ENCODE measurements at regions of chr6 and their contacts with region 1.

Region 1: DNA sequence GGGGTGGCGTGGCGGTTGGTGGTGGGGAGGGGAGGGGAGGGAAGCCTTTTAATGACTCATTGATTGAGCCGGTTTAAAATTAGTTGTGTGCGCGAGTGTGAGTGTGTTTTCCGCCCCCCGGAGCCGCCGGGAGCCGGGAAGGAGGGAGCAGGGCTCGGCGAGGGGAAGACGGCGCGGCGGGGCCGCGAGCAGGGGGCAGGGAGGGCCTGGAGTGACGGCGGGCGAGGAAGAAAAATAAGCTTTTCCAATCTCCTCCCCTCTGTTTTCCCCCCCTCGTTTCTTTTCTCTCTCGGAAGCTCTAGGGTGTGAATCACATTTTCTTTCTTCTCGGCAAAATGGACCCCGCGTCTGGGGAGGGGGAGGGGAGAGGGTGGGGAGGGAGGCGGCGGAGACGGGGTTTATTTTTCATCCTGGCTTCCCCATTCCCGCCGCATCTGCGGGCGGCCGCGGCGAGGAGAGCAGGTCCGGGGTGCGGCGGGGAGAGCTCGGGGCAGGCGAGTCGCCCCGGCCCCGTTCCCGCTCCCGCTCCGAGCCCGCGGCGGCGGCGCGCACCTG is 847 bp downstream of the BICRAL start:
- DNase-seq: peak; percentile 95
- H3K4me3 ChIP-seq: peak overlapping the region; percentile 87 to 98 (median 94)
- H3K27ac ChIP-seq: peak overlapping the region; percentile 99
- H3K4me1 ChIP-seq: peaks cover 16% of the 10 kb centered on the region
- H3K27me3 ChIP-seq: no peaks in the 10 kb centered on the region
- CTCF ChIP-seq: no peak
- POLR2A ChIP-seq: peak; percentile 59

Region 2: DNA sequence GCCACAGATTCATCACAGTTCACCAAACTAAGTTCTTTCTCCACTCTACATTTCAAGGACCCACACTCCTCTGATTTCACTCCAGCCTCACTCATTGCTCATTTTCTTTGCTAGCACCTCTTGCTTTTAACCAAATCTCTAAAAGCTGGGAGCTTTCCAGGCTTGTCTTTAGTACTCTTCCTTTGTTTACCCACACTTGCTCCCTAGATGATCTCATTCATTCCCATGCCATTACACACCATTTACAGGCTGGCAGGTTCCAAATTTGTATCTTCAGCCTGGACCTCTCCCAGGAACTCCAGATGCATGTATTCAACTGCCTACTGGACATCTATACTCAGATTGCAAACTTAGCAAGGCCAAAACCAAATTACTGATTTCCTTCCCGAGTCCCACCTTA is 582.7 kb before region 1 on chr6:
- CTCF ChIA-PET with region 1: no interaction called
- POLR2A ChIA-PET with region 1: interaction called, 10 read pairs
- dilution Hi-C with region 1: no loop called
- intact Hi-C with region 1: no loop called
- DNase-seq: no peak
- H3K4me3 ChIP-seq: no peak overlapping the region
- H3K27ac ChIP-seq: no peak overlapping the region
- H3K4me1 ChIP-seq: peaks cover 6% of the 10 kb centered on the region
- H3K27me3 ChIP-seq: no peaks in the 10 kb centered on the region
- CTCF ChIP-seq: no peak
- POLR2A ChIP-seq: no peak

Region 3: DNA sequence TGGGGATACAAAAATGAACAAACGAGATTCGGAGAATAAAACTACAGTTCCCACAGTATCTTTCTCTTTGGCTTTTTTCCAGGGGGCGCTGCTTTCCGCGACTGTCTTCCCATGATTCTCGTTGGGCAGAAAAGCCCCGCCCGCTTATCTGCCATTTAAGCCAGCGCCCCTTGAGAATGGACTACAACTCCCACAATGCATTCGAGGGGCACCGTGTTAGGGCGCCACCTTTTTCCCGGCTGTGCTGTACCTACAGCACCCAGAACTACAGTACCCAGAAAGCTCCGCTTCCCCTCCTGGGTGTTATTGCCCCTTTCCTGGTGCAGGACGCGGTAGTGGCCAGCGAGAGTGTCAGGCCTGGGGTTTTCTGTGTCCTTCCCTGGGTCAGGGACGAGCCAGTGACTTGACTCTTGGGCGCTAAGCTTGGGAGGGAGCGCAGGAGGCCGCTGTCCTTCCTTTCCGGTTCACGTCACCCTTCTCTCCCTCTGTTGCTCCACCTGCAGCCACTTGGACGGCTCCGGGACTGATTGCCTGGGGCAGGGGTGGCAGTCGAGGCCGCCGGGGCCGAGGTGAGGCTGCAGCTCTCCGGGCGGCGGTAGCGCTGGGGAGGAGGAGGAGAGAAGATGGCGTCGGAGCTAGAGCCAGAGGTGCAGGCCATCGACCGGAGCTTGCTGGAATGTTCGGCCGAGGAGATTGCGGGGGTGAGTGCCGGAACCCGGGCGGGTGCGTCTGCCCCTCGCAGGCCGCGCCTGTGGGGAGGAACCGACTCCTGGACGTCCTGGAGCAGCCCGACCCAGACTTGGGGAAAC is 218.8 kb before region 1 on chr6 and contains the start of gene UBR2:
- CTCF ChIA-PET with region 1: no interaction called
- POLR2A ChIA-PET with region 1: no interaction called
- dilution Hi-C with region 1: no loop called
- intact Hi-C with region 1: loop called (anchors 1 kb)
- DNase-seq: peak; percentile 98
- H3K4me3 ChIP-seq: peak within 1 kb of the TSS; percentile 93 to 97 (median 94)
- H3K27ac ChIP-seq: peak within 1 kb of the TSS; percentile 59
- H3K4me1 ChIP-seq: peaks cover 11% of the 10 kb centered on the region
- H3K27me3 ChIP-seq: peaks cover 0 to 3% of the 10 kb centered on the region in 2 experiments
- CTCF ChIP-seq: peak in 1 of 2 donors; percentile 27
- POLR2A ChIP-seq: peak; percentile 56
- total RNA-seq, gene UBR2: 18.6 and 22.3 TPM in 2 replicates

Region 4: GRCh38 chr6:42745707-42746462 is 36.8 kb before region 1 on chr6 and contains the start of gene TBCC:
- CTCF ChIA-PET with region 1: interaction called, 5 read pairs
- POLR2A ChIA-PET with region 1: interaction called, 39 read pairs
- dilution Hi-C with region 1: no loop called
- intact Hi-C with region 1: loop called (anchors 1 kb)
- DNase-seq: peak; percentile 98
- H3K4me3 ChIP-seq: peak within 1 kb of the TSS; percentile 84 to 92 (median 90)
- H3K27ac ChIP-seq: peak within 1 kb of the TSS; percentile 72
- H3K4me1 ChIP-seq: peaks cover 25% of the 10 kb centered on the region
- H3K27me3 ChIP-seq: no peaks in the 10 kb centered on the region
- CTCF ChIP-seq: no peak
- POLR2A ChIP-seq: peak; percentile 97
- total RNA-seq, gene TBCC: 17.1 and 19.1 TPM in 2 replicates

Measured in endothelial cell of umbilical vein (primary cell).